ENCODE measurements at regions of chrX and their contacts with region 1.

Region 1: GRCh38 chrX:17580539-17581152 is 156.6 kb upstream of the SCML1 start:
- DNase-seq: peak in 1 of 2 donors; percentile 75
- H3K4me3 ChIP-seq: no peak overlapping the region
- H3K27ac ChIP-seq: peak overlapping the region; percentile 62 to 68
- H3K4me1 ChIP-seq: peaks cover 0 to 24% of the 10 kb centered on the region in 2 donors
- H3K27me3 ChIP-seq: no peaks in the 10 kb centered on the region
- CTCF ChIP-seq: no peak

Region 2: DNA sequence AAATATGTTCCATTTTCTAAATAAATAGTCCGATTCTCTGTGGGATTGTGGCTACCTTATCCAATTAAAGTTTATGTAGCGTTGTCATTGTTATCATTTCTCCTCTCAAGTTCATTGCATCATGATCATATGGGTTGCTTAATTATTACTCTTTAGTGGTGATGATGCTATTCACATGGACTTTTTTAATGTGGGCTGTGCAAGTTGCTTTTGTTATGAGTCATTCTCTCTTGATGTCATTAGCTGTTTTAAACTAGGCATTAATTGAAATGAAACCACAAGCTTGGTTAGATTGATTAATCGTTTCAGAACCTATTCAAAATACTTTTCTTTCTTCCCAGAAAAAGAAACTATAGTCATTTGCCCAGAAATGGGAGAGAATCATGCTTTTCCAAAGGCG is 167.4 kb before region 1 on chrX:
- intact Hi-C with region 1: loop called (anchors 5 kb)
- DNase-seq: no peak
- H3K4me3 ChIP-seq: no peak overlapping the region
- H3K27ac ChIP-seq: no peak overlapping the region
- H3K4me1 ChIP-seq: peaks cover 0 to 4% of the 10 kb centered on the region in 2 donors
- H3K27me3 ChIP-seq: no peaks in the 10 kb centered on the region
- CTCF ChIP-seq: no peak

Region 3: DNA sequence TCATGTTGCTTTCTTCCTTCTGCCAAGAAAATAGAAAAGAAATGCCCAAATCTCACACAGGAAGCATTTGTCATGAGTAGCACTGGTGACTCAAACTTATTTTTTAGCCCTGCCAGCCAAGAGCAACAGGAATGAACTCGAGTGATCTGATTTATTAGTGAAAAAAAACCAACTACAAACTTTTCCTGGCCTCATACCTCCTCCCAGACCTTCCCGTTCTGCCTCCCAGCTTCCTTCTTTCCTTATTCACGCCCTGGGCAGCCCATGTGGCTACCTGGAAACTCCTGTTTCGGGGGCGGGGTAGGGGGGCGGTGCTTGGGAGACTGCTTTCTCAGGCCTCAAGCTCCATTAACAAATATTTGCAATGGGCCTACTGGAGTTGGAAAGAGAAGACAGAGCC is 27.2 kb before region 1 on chrX:
- intact Hi-C with region 1: loop called (anchors 1 kb)
- DNase-seq: peak; percentile 11 to 75
- H3K4me3 ChIP-seq: no peak overlapping the region
- H3K27ac ChIP-seq: peak overlapping the region; percentile 43 to 68
- H3K4me1 ChIP-seq: peaks cover 12 to 22% of the 10 kb centered on the region in 2 donors
- H3K27me3 ChIP-seq: no peaks in the 10 kb centered on the region
- CTCF ChIP-seq: no peak

Region 4: GRCh38 chrX:17736856-17737706 is 156.4 kb after region 1 on chrX and contains the start of gene SCML1:
- intact Hi-C with region 1: loop called (anchors 10 kb)
- DNase-seq: peak; percentile 88 to 98
- H3K4me3 ChIP-seq: peak within 1 kb of the TSS; percentile 55 to 69
- H3K27ac ChIP-seq: peak within 1 kb of the TSS; percentile 92 to 95
- H3K4me1 ChIP-seq: peaks cover 0 to 3% of the 10 kb centered on the region in 2 donors
- H3K27me3 ChIP-seq: no peaks in the 10 kb centered on the region
- CTCF ChIP-seq: no peak
- total RNA-seq, gene SCML1: 5.7 TPM